SK-N-SH (cell line): ENCODE measurements at regions of chr1 and their contacts with region 1.

Region 1: GRCh38 chr1:42146626-42147320 is 6.4 kb upstream of the GUCA2B start:
- DNase-seq: peak; percentile 85
- H3K4me3 ChIP-seq: no peak overlapping the region; a peak in 1 of 4 replicates
- H3K27ac ChIP-seq: no peak overlapping the region
- H3K4me1 ChIP-seq: no peaks in the 10 kb centered on the region
- H3K27me3 ChIP-seq: peaks cover 16% of the 10 kb centered on the region
- CTCF ChIP-seq: peak; percentile 85
- EP300 ChIP-seq: no peak
- RAD21 ChIP-seq: peak; percentile 94

Region 2: GRCh38 chr1:42165511-42166163 is 18.9 kb after region 1 on chr1:
- CTCF ChIA-PET with region 1: interaction called, 18 read pairs
- POLR2A ChIA-PET with region 1: interaction called, 5 read pairs
- DNase-seq: peak; percentile 76
- H3K4me3 ChIP-seq: no peak overlapping the region
- H3K27ac ChIP-seq: no peak overlapping the region
- H3K4me1 ChIP-seq: peaks cover 0 to 13% of the 10 kb centered on the region in 2 experiments; a peak in 1 of 4 replicates
- H3K27me3 ChIP-seq: no peaks in the 10 kb centered on the region
- CTCF ChIP-seq: no peak
- EP300 ChIP-seq: no peak
- RAD21 ChIP-seq: no peak